PC-9 (cell line): ENCODE measurements at regions of chr7 and their contacts with region 1.

Region 1: GRCh38 chr7:86431761-86432160 is 211.9 kb upstream of the GRM3 start:
- DNase-seq: no peak
- H3K4me3 ChIP-seq: no peak overlapping the region
- H3K27ac ChIP-seq: no peak overlapping the region
- H3K4me1 ChIP-seq: no peaks in the 10 kb centered on the region
- H3K27me3 ChIP-seq: no peaks in the 10 kb centered on the region
- CTCF ChIP-seq: no peak

Region 2: GRCh38 chr7:85392326-85392725 is 1039.4 kb before region 1 on chr7:
- CTCF ChIA-PET with region 1: no interaction called
- POLR2A ChIA-PET with region 1: no interaction called
- intact Hi-C with region 1: no loop called
- DNase-seq: no peak
- H3K4me3 ChIP-seq: no peak overlapping the region
- H3K27ac ChIP-seq: no peak overlapping the region
- H3K4me1 ChIP-seq: no peaks in the 10 kb centered on the region
- H3K27me3 ChIP-seq: no peaks in the 10 kb centered on the region
- CTCF ChIP-seq: no peak

Region 3: GRCh38 chr7:86708031-86708680 is 276.4 kb after region 1 on chr7:
- CTCF ChIA-PET with region 1: no interaction called
- POLR2A ChIA-PET with region 1: interaction called, 11 read pairs
- intact Hi-C with region 1: no loop called
- DNase-seq: no peak
- H3K4me3 ChIP-seq: no peak overlapping the region
- H3K27ac ChIP-seq: no peak overlapping the region
- H3K4me1 ChIP-seq: no peaks in the 10 kb centered on the region
- H3K27me3 ChIP-seq: no peaks in the 10 kb centered on the region
- CTCF ChIP-seq: no peak

Region 4: GRCh38 chr7:86851555-86851954 is 419.8 kb after region 1 on chr7:
- CTCF ChIA-PET with region 1: interaction called, 10 read pairs
- POLR2A ChIA-PET with region 1: no interaction called
- intact Hi-C with region 1: no loop called
- DNase-seq: no peak
- H3K4me3 ChIP-seq: no peak overlapping the region
- H3K27ac ChIP-seq: no peak overlapping the region
- H3K4me1 ChIP-seq: peaks cover 14% of the 10 kb centered on the region
- H3K27me3 ChIP-seq: no peaks in the 10 kb centered on the region
- CTCF ChIP-seq: no peak